Activated CD4-positive, alpha-beta T cell treated with anti-CD3 and anti-CD28 coated beads, Interleukin-2, amount 10 ng/mL, durations not matched to agents 24 days and 14 days (primary cell): ENCODE measurements at regions of chr2 and their contacts with region 1.

Region 1: GRCh38 chr2:28452534-28453081 is 43.3 kb upstream of the PLB1 start:
- DNase-seq: peak; percentile 94
- H3K4me3 Mint-ChIP-seq: no peak overlapping the region
- H3K27ac Mint-ChIP-seq: peak overlapping the region; percentile 40
- H3K4me1 Mint-ChIP-seq: peaks cover 42% of the 10 kb centered on the region
- H3K27me3 Mint-ChIP-seq: no peaks in the 10 kb centered on the region

Region 2: DNA sequence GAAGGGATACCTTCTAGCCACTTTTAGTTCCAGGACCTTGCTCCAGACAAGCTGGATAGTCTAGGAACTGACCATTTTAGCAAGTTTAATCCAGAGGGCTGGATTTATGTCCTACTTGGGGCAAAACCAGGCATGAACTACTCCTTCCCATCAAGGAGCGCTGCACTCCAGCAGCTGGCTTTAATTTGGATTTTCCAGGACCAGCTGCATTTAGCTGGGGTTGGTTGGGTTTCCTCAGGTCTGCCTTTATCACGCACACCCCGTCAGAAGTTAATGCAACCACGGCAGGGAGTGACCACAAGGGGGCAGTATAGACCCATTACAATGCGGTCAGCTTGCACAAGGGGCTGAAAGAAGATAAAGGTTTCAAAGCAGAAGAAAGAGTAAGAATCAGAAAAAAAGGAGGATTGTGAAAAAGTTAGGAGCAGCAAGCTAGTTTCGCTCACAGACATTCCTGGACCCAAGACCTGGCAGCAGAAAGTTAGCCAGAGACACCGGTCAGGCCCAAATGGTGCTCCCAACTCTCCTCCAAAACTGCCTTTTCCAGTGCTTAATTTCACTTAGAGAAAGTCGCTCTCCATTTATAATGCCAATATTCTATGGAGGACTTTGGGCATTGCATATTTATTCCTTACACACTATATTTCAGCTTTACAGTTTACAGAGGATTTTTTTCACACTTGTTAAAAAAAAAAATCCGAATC is 748.8 kb before region 1 on chr2:
- intact Hi-C with region 1: loop called (anchors 1 kb)
- DNase-seq: peak; percentile 95
- H3K4me3 Mint-ChIP-seq: no peak overlapping the region
- H3K27ac Mint-ChIP-seq: no peak overlapping the region
- H3K4me1 Mint-ChIP-seq: peaks cover 13% of the 10 kb centered on the region
- H3K27me3 Mint-ChIP-seq: no peaks in the 10 kb centered on the region

Region 3: DNA sequence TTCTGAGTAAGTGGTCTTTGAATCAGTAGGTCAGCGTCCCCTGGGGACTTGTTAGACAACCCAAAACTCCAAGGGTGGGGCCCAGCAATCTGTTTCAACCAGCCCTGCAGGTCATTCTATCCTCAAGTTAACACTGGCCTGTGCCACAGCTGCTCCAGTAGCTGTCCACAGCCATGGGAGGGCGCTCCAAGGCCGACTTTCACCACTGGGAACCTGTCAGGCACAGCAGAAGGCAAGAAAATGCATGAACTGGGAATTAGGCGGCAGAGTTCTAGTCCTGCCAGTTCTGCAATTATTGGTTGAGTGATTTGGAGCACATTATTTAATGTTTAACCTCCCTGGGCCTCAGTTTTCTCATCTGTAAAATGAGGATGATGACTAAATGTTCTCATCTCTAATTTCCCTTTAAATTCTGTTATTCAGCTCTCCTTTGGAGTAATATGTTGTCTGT is 698.4 kb before region 1 on chr2:
- intact Hi-C with region 1: loop called (anchors 1 kb)
- DNase-seq: peak; percentile 94
- H3K4me3 Mint-ChIP-seq: no peak overlapping the region
- H3K27ac Mint-ChIP-seq: peak overlapping the region; percentile 25
- H3K4me1 Mint-ChIP-seq: peaks cover 8% of the 10 kb centered on the region
- H3K27me3 Mint-ChIP-seq: peaks cover 3% of the 10 kb centered on the region

Region 4: GRCh38 chr2:27771548-27772335 is 680.9 kb before region 1 on chr2 and contains the start of gene MRPL33:
- intact Hi-C with region 1: loop called (anchors 5 kb)
- DNase-seq: peak; percentile 97
- H3K4me3 Mint-ChIP-seq: peak within 1 kb of the TSS; percentile 98
- H3K27ac Mint-ChIP-seq: peak within 1 kb of the TSS; percentile 97
- H3K4me1 Mint-ChIP-seq: peaks cover 23% of the 10 kb centered on the region
- H3K27me3 Mint-ChIP-seq: no peaks in the 10 kb centered on the region
- total RNA-seq, gene MRPL33: 59.0 and 59.6 TPM in 2 replicates

Region 5: GRCh38 chr2:27890146-27890923 is 562.3 kb before region 1 on chr2 and contains the starts of genes BABAM2 and RBKS:
- intact Hi-C with region 1: loop called (anchors 2 kb)
- DNase-seq: peak; percentile 97
- H3K4me3 Mint-ChIP-seq: peak within 1 kb of the TSS; percentile 100
- H3K27ac Mint-ChIP-seq: peak within 1 kb of the TSS; percentile 100
- H3K4me1 Mint-ChIP-seq: peaks cover 57% of the 10 kb centered on the region
- H3K27me3 Mint-ChIP-seq: peaks cover 2% of the 10 kb centered on the region
- total RNA-seq, gene BABAM2: 45.9 and 46.7 TPM in 2 replicates
- total RNA-seq, gene RBKS: 1.3 and 1.4 TPM in 2 replicates

Region 6: DNA sequence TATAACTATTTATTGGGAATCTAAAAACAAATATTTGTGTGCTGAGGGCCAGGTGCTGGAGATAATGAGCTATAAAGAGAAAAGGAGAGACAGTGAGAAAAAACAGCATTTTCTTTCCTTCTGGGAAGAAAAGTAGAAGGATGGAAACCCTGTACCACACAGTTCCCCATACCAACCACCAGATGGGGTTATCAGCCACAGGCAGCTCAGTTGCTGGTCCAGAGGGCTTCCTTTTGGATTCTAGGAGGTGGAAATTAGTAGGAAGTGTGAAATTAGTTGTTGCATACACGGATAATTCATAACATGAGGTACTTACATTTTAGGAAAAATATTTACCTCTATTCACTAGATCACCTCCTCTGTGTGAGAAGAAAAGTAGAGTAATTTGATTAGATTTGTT is 297.0 kb before region 1 on chr2:
- intact Hi-C with region 1: loop called (anchors 10 kb)
- DNase-seq: peak; percentile 58
- H3K4me3 Mint-ChIP-seq: no peak overlapping the region
- H3K27ac Mint-ChIP-seq: no peak overlapping the region
- H3K4me1 Mint-ChIP-seq: no peaks in the 10 kb centered on the region
- H3K27me3 Mint-ChIP-seq: no peaks in the 10 kb centered on the region

Region 7: GRCh38 chr2:28250006-28250405 is 202.6 kb before region 1 on chr2:
- intact Hi-C with region 1: loop called (anchors 2 kb)
- DNase-seq: no peak
- H3K4me3 Mint-ChIP-seq: no peak overlapping the region
- H3K27ac Mint-ChIP-seq: no peak overlapping the region
- H3K4me1 Mint-ChIP-seq: peaks cover 43% of the 10 kb centered on the region
- H3K27me3 Mint-ChIP-seq: no peaks in the 10 kb centered on the region